Right ventricle myocardium superior (tissue), 1 donor: ENCODE measurements at regions of chr7 and their contacts with region 1.

Region 1: GRCh38 chr7:70975754-70976153 is 156.2 kb upstream of the GALNT17 start:
- DNase-seq: no peak
- ATAC-seq: no peak

Region 2: GRCh38 chr7:70953796-70954195 is 22.0 kb before region 1 on chr7:
- intact Hi-C with region 1: loop called (anchors 2 kb)
- DNase-seq: no peak
- ATAC-seq: no peak

Region 3: DNA sequence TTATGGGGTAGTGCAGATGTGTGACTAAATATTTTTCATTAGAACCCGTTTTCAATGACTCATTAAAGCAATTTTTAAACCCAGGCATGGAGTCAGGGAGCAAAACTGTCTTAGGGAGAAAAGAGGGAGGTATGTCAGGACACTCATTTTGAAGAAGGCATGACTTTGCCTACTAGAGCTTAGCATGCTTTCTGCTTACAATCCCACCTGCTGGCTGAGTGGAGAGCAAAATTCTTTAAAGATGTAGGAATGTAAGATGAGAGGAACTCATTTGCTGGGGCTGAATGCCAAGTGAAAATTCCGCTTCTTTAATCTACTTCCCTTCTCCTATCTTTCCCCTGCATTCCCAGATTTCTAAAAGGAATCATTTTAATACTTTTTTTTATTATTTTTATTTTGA is 388.8 kb after region 1 on chr7:
- intact Hi-C with region 1: no loop called
- DNase-seq: no peak
- ATAC-seq: no peak